Heart right ventricle (tissue), 16 donors: ENCODE measurements at regions of chr3 and their contacts with region 1.

Region 1: GRCh38 chr3:114624571-114625181 is 330.8 kb downstream of the TIGIT start:
- DNase-seq: peak; percentile 89 to 94
- ATAC-seq: peak; percentile 93 to 97 (median 94)
- H3K4me3 ChIP-seq: peak overlapping the region; percentile 23 to 59 (median 50)
- H3K27ac ChIP-seq: peak overlapping the region; percentile 88 to 98 (median 95)
- H3K4me1 ChIP-seq: peaks cover 9 to 87% (median 63%) of the 10 kb centered on the region in 9 donors
- H3K27me3 ChIP-seq: no peaks in the 10 kb centered on the region
- CTCF ChIP-seq: no peak

Region 2: DNA sequence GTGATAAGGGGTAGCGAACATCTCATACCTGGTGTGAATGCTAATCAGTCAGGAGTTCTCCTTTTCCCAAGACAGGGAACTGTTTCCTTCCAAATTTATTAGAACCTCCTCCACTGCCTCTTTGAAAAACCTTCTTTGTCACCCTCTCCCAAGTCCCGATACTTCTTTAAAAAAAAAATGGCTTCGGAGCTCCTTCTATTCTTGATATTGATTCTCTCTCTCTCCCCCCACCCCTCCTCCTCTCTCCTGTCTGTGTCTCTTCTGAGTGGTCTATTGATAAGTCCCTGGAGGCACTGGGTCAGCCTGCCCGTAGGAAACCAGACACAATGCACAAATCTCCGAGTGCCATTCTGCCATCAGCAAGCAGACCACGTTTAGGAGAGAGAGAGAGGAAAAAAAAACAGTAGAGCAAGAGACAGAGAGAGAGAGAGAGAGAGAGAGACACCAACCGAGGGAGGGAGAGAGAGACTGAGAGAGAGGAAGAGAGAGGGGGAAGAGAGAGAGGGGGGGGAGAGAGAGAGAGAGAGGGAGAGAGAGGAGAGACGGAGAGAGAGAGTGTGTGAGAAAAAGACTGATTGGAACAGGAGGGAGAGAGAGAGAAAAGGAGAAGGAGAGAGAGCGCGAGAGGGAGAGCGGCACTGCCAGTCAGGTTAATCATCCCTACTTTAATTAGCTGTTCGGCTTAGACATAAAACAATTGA is 170.0 kb before region 1 on chr3:
- intact Hi-C with region 1: loop called in 1 of 10 experiments (anchors 5 kb)
- DNase-seq: peak in 1 of 2 donors; percentile 21
- ATAC-seq: peak; percentile 30 to 66 (median 42)
- H3K4me3 ChIP-seq: peak overlapping the region in 9 of 10 donors; percentile 36 to 59 (median 56)
- H3K27ac ChIP-seq: peak overlapping the region; percentile 10 to 89 (median 61)
- H3K4me1 ChIP-seq: peaks cover 0 to 80% (median 59%) of the 10 kb centered on the region in 9 donors
- H3K27me3 ChIP-seq: no peaks in the 10 kb centered on the region
- CTCF ChIP-seq: no peak

Region 3: DNA sequence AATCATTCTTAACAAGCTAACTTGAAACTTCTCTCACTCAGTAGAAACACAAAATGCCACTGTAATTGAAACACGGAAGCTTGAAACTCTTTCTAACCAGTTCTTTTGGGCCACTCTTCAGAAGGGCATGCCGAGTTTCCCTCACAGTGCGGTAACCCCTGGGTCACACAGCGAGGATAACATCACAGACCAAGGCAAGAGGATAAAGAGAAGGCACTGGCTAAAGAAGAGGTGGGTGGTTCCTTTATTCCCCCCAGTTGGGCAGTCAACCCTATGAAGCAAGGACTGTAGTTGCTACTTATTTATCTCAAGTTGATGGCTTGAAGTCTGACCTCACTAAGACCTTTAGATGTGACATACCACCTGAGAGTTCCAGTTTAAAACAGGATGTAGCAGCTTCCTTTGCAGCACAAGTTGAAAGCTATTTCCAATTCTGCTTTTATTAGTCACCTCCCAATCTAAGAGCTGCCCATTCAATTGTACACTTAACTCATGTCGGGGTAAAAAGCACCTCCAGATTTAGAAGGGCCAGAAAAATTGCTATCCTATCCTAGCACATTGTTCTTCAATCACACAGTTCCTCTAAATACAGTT is 58.4 kb before region 1 on chr3:
- intact Hi-C with region 1: no loop called
- DNase-seq: no peak
- ATAC-seq: peak in 7 of 8 donors; percentile 24 to 71 (median 45)
- H3K4me3 ChIP-seq: no peak overlapping the region
- H3K27ac ChIP-seq: peak overlapping the region in 4 of 10 donors; percentile 1 to 39 (median 22)
- H3K4me1 ChIP-seq: peaks cover 0 to 80% (median 50%) of the 10 kb centered on the region in 9 donors
- H3K27me3 ChIP-seq: no peaks in the 10 kb centered on the region
- CTCF ChIP-seq: no peak

Region 4: GRCh38 chr3:115147329-115148141 is 522.9 kb after region 1 on chr3:
- intact Hi-C with region 1: loop called in 1 of 10 experiments (anchors 10 kb)
- DNase-seq: peak; percentile 98 to 100
- ATAC-seq: peak; percentile 88 to 96 (median 93)
- H3K4me3 ChIP-seq: peak overlapping the region; percentile 61 to 94 (median 86)
- H3K27ac ChIP-seq: peak overlapping the region; percentile 94 to 99 (median 97)
- H3K4me1 ChIP-seq: peaks cover 0 to 26% (median 16%) of the 10 kb centered on the region in 9 donors
- H3K27me3 ChIP-seq: no peaks in the 10 kb centered on the region
- CTCF ChIP-seq: peak in 2 of 9 donors; percentile 17 to 22